GM12878 (cell line): ENCODE measurements at regions of chr15 and their contacts with region 1.

Region 1: DNA sequence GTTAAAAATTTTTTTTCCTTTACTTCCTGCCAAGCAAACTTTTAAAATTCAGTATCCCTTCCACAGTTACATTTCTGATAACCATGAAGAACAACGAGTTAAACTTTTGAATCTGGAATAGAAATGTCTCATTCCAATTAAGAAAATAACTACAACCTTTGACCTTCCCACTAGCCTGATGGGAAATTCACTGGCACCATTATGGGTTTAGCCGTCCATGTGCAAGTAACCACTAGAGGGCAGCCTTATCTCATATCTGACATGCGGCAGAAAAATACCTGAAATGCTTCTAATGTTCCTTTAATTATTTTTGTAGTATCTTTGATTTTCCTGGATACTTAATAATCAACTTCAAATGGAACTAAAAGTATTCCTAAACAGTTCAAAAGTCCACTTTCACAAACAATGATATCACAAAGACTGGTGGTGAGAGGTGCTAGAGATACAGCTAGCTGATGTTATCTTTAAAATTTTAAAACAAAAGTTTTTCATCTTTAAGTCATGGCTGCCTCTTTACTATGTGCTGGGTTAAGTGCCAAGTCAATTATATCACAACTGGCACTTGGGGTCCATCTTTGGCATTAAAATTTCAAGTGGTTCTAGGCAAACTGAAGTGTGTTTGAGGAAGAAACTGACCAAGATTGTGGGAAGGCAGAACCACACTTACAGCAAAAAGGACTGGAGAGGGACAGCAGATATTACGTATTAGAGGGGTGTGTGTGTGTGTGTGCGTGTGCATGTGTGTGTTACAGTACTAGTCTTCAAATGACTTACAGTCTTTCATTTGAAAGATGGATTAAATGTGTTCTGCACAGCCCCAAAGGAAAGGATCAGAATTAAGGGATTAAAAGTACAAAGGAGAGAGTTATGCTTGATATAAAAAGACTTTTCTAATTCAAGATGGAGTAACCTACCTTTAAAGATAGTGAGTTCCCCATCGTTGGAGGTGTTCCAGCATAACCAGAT is 107.1 kb upstream of the ICE2 start:
- DNase-seq: no peak
- ATAC-seq: peak; percentile 34
- H3K4me3 ChIP-seq: peak overlapping the region; percentile 11
- H3K27ac ChIP-seq: peak overlapping the region; percentile 94
- H3K4me1 ChIP-seq: peaks cover 45% of the 10 kb centered on the region
- H3K27me3 ChIP-seq: no peaks in the 10 kb centered on the region
- CTCF ChIP-seq: peak; percentile 74 to 90 (median 90)
- EP300 ChIP-seq: no peak
- POLR2A ChIP-seq: no peak
- RAD21 ChIP-seq: peak; percentile 95

Region 2: GRCh38 chr15:60340207-60340921 is 245.7 kb before region 1 on chr15:
- CTCF ChIA-PET with region 1: no interaction called
- POLR2A ChIA-PET with region 1: no interaction called
- RAD21 ChIA-PET with region 1: no interaction called
- SMC1A ChIA-PET with region 1: no interaction called
- in situ Hi-C with region 1: no loop called
- intact Hi-C with region 1: no loop called
- DNase-seq: no peak
- ATAC-seq: no peak
- H3K4me3 ChIP-seq: no peak overlapping the region
- H3K27ac ChIP-seq: no peak overlapping the region
- H3K4me1 ChIP-seq: no peaks in the 10 kb centered on the region
- H3K27me3 ChIP-seq: no peaks in the 10 kb centered on the region
- CTCF ChIP-seq: no peak
- EP300 ChIP-seq: no peak
- POLR2A ChIP-seq: no peak
- RAD21 ChIP-seq: no peak

Region 3: GRCh38 chr15:60493166-60493565 is 92.9 kb before region 1 on chr15:
- CTCF ChIA-PET with region 1: no interaction called
- POLR2A ChIA-PET with region 1: no interaction called
- RAD21 ChIA-PET with region 1: no interaction called
- SMC1A ChIA-PET with region 1: no interaction called
- in situ Hi-C with region 1: no loop called
- intact Hi-C with region 1: no loop called
- DNase-seq: no peak
- ATAC-seq: no peak
- H3K4me3 ChIP-seq: no peak overlapping the region
- H3K27ac ChIP-seq: no peak overlapping the region
- H3K4me1 ChIP-seq: no peaks in the 10 kb centered on the region
- H3K27me3 ChIP-seq: no peaks in the 10 kb centered on the region
- CTCF ChIP-seq: no peak
- EP300 ChIP-seq: no peak
- POLR2A ChIP-seq: no peak
- RAD21 ChIP-seq: no peak

Region 4: DNA sequence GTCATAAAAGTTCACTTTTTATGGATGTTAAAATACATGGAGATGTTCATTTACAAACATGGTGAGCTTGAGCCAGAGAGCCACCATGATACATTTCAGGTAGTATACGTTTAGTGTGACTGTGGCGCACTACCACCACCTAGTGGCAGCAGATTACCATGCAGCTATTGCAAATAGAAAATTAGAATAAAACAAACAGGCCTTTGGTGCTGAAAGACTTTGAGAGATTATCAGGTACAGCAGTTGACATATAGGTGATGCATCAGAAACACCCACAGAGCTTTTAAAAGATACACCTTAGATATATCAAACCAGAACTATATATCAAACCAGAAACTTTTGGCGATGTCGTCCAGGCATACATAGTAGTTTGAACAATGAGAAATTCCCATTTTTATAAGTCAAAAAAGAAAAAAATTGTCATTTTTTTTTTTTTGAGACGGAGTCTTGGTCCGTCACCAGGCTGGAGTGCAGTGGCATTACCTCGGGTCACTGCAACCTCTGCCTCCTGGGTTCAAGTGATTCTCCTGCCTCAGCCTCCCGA is 65.1 kb before region 1 on chr15:
- CTCF ChIA-PET with region 1: interaction called, 65 read pairs
- POLR2A ChIA-PET with region 1: interaction called, 3 read pairs
- RAD21 ChIA-PET with region 1: interaction called, 18 read pairs
- SMC1A ChIA-PET with region 1: interaction called, 23 read pairs
- in situ Hi-C with region 1: no loop called
- intact Hi-C with region 1: loop called (anchors 5 kb)
- DNase-seq: no peak
- ATAC-seq: peak; percentile 92
- H3K4me3 ChIP-seq: no peak overlapping the region
- H3K27ac ChIP-seq: peak overlapping the region; percentile 67
- H3K4me1 ChIP-seq: peaks cover 16% of the 10 kb centered on the region
- H3K27me3 ChIP-seq: no peaks in the 10 kb centered on the region
- CTCF ChIP-seq: peak; percentile 74 to 86 (median 86)
- EP300 ChIP-seq: no peak
- POLR2A ChIP-seq: no peak
- RAD21 ChIP-seq: peak; percentile 83

Region 5: GRCh38 chr15:60563066-60563465 is 23.0 kb before region 1 on chr15:
- CTCF ChIA-PET with region 1: interaction called, 143 read pairs
- POLR2A ChIA-PET with region 1: interaction called, 11 read pairs
- RAD21 ChIA-PET with region 1: interaction called, 309 read pairs
- SMC1A ChIA-PET with region 1: interaction called, 480 read pairs
- in situ Hi-C with region 1: no loop called
- intact Hi-C with region 1: loop called (anchors 2 kb)
- DNase-seq: no peak
- ATAC-seq: no peak
- H3K4me3 ChIP-seq: no peak overlapping the region
- H3K27ac ChIP-seq: peak overlapping the region; percentile 90
- H3K4me1 ChIP-seq: peaks cover 44% of the 10 kb centered on the region
- H3K27me3 ChIP-seq: no peaks in the 10 kb centered on the region
- CTCF ChIP-seq: no peak
- EP300 ChIP-seq: no peak
- POLR2A ChIP-seq: no peak
- RAD21 ChIP-seq: no peak

Region 6: GRCh38 chr15:60649845-60650548 is 64.0 kb after region 1 on chr15:
- CTCF ChIA-PET with region 1: interaction called, 10 read pairs
- POLR2A ChIA-PET with region 1: no interaction called
- RAD21 ChIA-PET with region 1: interaction called, 9 read pairs
- SMC1A ChIA-PET with region 1: interaction called, 7 read pairs
- in situ Hi-C with region 1: no loop called
- intact Hi-C with region 1: loop called (anchors 5 kb)
- DNase-seq: peak; percentile 57
- ATAC-seq: peak; percentile 69
- H3K4me3 ChIP-seq: peak overlapping the region; percentile 55; the same call in 1 of the 2 replicates
- H3K27ac ChIP-seq: peak overlapping the region; percentile 84
- H3K4me1 ChIP-seq: peaks cover 42% of the 10 kb centered on the region
- H3K27me3 ChIP-seq: no peaks in the 10 kb centered on the region
- CTCF ChIP-seq: peak in 2 of 3 experiments; percentile 33 to 34; a peak in 4 of 6 replicates
- EP300 ChIP-seq: peak; percentile 77 to 89; a peak in 3 of 4 replicates
- POLR2A ChIP-seq: no peak
- RAD21 ChIP-seq: peak; percentile 77

Region 7: GRCh38 chr15:60758961-60759729 is 173.1 kb after region 1 on chr15:
- CTCF ChIA-PET with region 1: no interaction called
- POLR2A ChIA-PET with region 1: no interaction called
- RAD21 ChIA-PET with region 1: no interaction called
- SMC1A ChIA-PET with region 1: no interaction called
- in situ Hi-C with region 1: no loop called
- intact Hi-C with region 1: no loop called
- DNase-seq: no peak
- ATAC-seq: no peak
- H3K4me3 ChIP-seq: no peak overlapping the region
- H3K27ac ChIP-seq: no peak overlapping the region
- H3K4me1 ChIP-seq: no peaks in the 10 kb centered on the region
- H3K27me3 ChIP-seq: no peaks in the 10 kb centered on the region; a peak in 1 of 4 replicates
- CTCF ChIP-seq: no peak
- EP300 ChIP-seq: no peak
- POLR2A ChIP-seq: no peak
- RAD21 ChIP-seq: no peak

Region 8: DNA sequence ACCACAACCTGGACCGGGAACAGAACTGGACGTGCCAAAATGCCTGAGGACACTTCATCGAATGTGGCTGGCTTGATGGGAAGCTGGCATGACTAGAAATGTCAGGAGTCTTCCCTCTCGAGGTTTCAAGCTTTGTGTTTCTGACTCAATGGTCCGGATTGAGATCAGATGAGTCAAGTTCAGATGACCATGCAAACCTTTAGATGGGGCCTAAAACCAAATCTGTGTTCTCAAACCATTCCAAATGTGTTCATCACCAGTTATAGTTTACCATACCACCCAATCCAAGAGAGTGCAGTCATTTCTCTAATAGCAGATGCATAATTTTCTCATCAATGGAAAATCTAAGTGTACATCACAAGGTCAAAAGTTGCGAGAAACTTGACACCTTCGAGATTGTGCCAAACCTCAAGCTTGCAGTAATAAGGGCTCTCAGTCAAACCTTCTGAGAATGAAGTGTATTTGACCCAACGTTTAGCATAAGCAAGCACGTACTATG is 274.0 kb after region 1 on chr15:
- CTCF ChIA-PET with region 1: interaction called, 4 read pairs
- POLR2A ChIA-PET with region 1: no interaction called
- RAD21 ChIA-PET with region 1: no interaction called
- SMC1A ChIA-PET with region 1: interaction called, 7 read pairs
- in situ Hi-C with region 1: no loop called
- intact Hi-C with region 1: loop called (anchors 5 kb)
- DNase-seq: no peak
- ATAC-seq: no peak
- H3K4me3 ChIP-seq: no peak overlapping the region
- H3K27ac ChIP-seq: no peak overlapping the region
- H3K4me1 ChIP-seq: no peaks in the 10 kb centered on the region
- H3K27me3 ChIP-seq: no peaks in the 10 kb centered on the region
- CTCF ChIP-seq: no peak
- EP300 ChIP-seq: no peak
- POLR2A ChIP-seq: no peak
- RAD21 ChIP-seq: no peak

Region 9: DNA sequence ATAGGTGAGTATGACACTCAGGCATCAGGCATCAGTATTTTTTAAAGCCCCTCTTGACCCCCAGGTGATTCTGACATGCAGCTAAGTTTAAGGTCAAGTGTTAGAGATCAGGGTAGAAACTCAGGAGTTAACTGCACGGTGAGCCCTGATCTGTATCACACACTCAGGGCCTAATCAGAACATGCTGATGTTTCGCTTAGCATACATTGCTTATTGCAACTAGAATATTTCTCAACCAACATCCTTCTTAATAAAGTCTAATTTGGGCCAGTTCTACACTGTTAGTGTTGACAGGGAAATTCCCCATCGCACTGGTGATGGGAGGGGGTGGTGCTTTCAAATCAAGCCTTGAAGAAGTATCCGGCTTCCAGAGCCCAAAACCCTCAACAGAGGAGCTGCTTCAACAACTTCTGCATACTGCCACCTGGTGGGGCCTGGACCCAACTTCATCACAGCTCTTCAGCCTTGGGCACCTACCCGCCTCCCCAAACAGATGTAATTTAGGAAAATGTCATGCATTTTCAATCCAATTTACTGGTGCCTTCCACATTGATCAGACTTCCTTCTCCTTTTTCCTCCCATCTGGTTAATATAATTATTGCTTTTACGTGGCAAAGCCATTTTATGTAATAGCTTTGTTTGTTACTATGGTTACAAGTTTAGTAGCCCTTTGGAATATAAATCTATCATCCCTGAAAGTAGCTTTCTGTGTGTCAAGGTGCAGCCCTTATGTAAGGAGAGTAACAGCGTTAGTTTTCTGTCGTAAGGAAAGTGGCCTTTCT is 330.8 kb after region 1 on chr15:
- CTCF ChIA-PET with region 1: interaction called, 141 read pairs
- POLR2A ChIA-PET with region 1: interaction called, 4 read pairs
- RAD21 ChIA-PET with region 1: interaction called, 94 read pairs
- SMC1A ChIA-PET with region 1: interaction called, 131 read pairs
- in situ Hi-C with region 1: loop called (anchors 5 kb)
- intact Hi-C with region 1: loop called (anchors 1 kb)
- DNase-seq: peak; percentile 76
- ATAC-seq: peak; percentile 96
- H3K4me3 ChIP-seq: no peak overlapping the region
- H3K27ac ChIP-seq: no peak overlapping the region
- H3K4me1 ChIP-seq: peaks cover 3% of the 10 kb centered on the region; the same call in 1 of the 2 replicates
- H3K27me3 ChIP-seq: no peaks in the 10 kb centered on the region
- CTCF ChIP-seq: peak; percentile 82 to 87 (median 84)
- EP300 ChIP-seq: no peak
- POLR2A ChIP-seq: no peak
- RAD21 ChIP-seq: peak; percentile 92

Region 10: GRCh38 chr15:61038387-61038786 is 452.4 kb after region 1 on chr15:
- CTCF ChIA-PET with region 1: no interaction called
- POLR2A ChIA-PET with region 1: no interaction called
- RAD21 ChIA-PET with region 1: no interaction called
- SMC1A ChIA-PET with region 1: no interaction called
- in situ Hi-C with region 1: no loop called
- intact Hi-C with region 1: no loop called
- DNase-seq: no peak
- ATAC-seq: no peak
- H3K4me3 ChIP-seq: no peak overlapping the region
- H3K27ac ChIP-seq: no peak overlapping the region
- H3K4me1 ChIP-seq: no peaks in the 10 kb centered on the region
- H3K27me3 ChIP-seq: no peaks in the 10 kb centered on the region
- CTCF ChIP-seq: no peak
- EP300 ChIP-seq: no peak
- POLR2A ChIP-seq: no peak
- RAD21 ChIP-seq: no peak